ENCODE measurements at regions of chrX and their contacts with region 1.

Region 1: DNA sequence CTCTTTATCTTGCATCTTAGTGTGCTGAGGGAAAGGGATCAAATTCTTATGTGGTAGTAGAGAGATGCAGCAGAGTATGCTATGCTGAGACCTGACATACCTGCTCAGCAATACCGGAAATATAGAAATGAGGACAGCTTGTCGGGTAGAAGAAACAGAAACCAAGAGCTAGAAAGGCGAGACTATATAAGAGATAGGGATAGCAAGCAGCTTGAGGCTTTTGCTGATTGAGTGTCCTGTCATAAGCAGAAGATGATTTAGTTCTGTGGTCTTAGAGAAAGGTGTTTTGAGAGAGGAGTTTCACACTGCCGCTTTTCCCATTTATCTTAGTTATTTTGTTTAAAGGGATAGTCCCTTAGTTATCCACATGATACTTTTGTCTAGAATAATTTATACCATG is 31.7 kb downstream of the USP9X start:
- DNase-seq: no peak
- ATAC-seq: no peak
- H3K4me3 ChIP-seq: no peak overlapping the region
- H3K27ac ChIP-seq: no peak overlapping the region
- H3K4me1 ChIP-seq: no peaks in the 10 kb centered on the region; the same call in 1 of the 2 replicates
- H3K27me3 ChIP-seq: no peaks in the 10 kb centered on the region; the same call in none of the 2 replicates
- CTCF ChIP-seq: no peak
- POLR2A ChIP-seq: no peak
- RAD21 ChIP-seq: no peak

Region 2: GRCh38 chrX:40877887-40878286 is 239.1 kb before region 1 on chrX:
- CTCF ChIA-PET with region 1: interaction called, 4 read pairs
- POLR2A ChIA-PET with region 1: no interaction called
- dilution Hi-C with region 1: no loop called
- in situ Hi-C with region 1: no loop called
- intact Hi-C with region 1: loop called (anchors 5 kb)
- DNase-seq: peak; percentile 39
- ATAC-seq: 0 out of 2 replicates have a peak, but pooled peaks have one; percentile 35
- H3K4me3 ChIP-seq: no peak overlapping the region
- H3K27ac ChIP-seq: no peak overlapping the region
- H3K4me1 ChIP-seq: no peaks in the 10 kb centered on the region
- H3K27me3 ChIP-seq: peaks cover 2% of the 10 kb centered on the region; the same call in 1 of the 2 replicates
- CTCF ChIP-seq: peak; percentile 55
- POLR2A ChIP-seq: no peak
- RAD21 ChIP-seq: peak; percentile 50

Region 3: GRCh38 chrX:40933132-40933705 is 183.7 kb before region 1 on chrX:
- CTCF ChIA-PET with region 1: no interaction called
- POLR2A ChIA-PET with region 1: no interaction called
- dilution Hi-C with region 1: no loop called
- in situ Hi-C with region 1: no loop called
- intact Hi-C with region 1: loop called (anchors 1 kb)
- DNase-seq: peak; percentile 27
- ATAC-seq: peak; percentile 10; the same call in 1 of the 2 replicates
- H3K4me3 ChIP-seq: peak overlapping the region; percentile 35; the same call in 1 of the 2 replicates
- H3K27ac ChIP-seq: peak overlapping the region; percentile 66; the same call in 1 of the 2 replicates
- H3K4me1 ChIP-seq: 0 out of 2 replicates have a peak, but pooled peaks cover 2% of the 10 kb centered on the region
- H3K27me3 ChIP-seq: no peaks in the 10 kb centered on the region
- CTCF ChIP-seq: no peak
- POLR2A ChIP-seq: no peak
- RAD21 ChIP-seq: no peak

Region 4: DNA sequence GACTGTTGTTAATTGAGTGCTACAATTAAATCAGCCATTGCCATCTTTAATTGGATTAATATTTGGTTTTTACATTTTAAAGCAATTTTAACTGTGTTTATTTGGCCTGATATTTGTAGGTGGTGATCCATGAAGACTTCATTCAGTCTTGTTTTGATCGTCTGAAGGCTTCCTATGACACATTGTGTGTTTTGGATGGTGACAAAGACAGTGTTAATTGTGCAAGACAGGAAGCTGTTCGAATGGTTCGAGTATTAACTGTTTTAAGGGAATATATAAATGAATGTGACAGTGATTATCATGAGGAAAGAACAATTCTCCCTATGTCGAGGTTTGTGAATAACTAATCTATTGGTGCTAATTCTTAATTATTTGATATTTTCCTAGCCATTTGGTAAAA is 50.9 kb after region 1 on chrX:
- CTCF ChIA-PET with region 1: no interaction called
- POLR2A ChIA-PET with region 1: no interaction called
- dilution Hi-C with region 1: no loop called
- in situ Hi-C with region 1: no loop called
- intact Hi-C with region 1: no loop called
- DNase-seq: no peak
- ATAC-seq: no peak
- H3K4me3 ChIP-seq: no peak overlapping the region
- H3K27ac ChIP-seq: no peak overlapping the region
- H3K4me1 ChIP-seq: no peaks in the 10 kb centered on the region
- H3K27me3 ChIP-seq: no peaks in the 10 kb centered on the region
- CTCF ChIP-seq: no peak
- POLR2A ChIP-seq: no peak
- RAD21 ChIP-seq: no peak

Measured in IMR-90 (cell line).